ENCODE measurements at regions of chr12 and their contacts with region 1.

Region 1: DNA sequence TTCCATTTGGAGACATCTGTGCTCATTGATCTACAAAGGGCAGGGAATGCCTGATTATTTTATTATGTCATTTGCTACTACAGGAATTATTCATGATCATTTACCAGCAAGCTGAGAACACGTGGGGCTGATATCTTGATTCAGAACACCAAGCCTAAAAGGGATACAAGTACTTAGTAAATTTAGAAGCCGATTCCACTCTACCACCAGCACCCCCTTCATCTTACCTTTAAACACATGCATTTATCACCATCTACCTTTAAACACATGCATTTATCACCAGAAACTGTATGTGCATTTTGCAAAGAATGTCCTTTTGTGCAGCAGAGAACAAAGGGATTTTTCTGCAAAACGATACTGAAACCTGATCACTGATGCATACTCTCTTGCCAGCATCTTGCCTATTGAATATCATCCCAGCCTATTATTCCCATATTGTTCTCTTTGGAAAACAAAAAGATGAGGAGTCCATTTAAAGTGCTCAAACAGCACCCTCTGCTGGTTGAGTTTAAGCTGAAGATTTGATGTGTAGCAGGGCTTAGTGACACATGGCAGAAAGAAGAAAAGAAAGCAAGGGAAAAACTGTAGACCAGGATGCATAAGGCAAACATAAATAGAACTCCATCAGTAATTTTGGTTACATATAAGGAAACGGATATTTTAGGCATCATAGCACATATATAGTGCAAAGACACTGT is 132.6 kb upstream of the PLEKHG7 start:
- DNase-seq: peak in 4 of 5 donors; percentile 35 to 79 (median 52)
- H3K4me3 ChIP-seq: no peak overlapping the region
- H3K27ac ChIP-seq: no peak overlapping the region
- H3K4me1 ChIP-seq: peaks cover 2% of the 10 kb centered on the region
- H3K27me3 ChIP-seq: no peaks in the 10 kb centered on the region
- CTCF ChIP-seq: peak; percentile 47 to 93 (median 90)
- EP300 ChIP-seq: no peak
- POLR2A ChIP-seq: no peak

Region 2: GRCh38 chr12:91367234-91367849 is 1202.9 kb before region 1 on chr12:
- intact Hi-C with region 1: loop called in 1 of 4 experiments (anchors 5 kb)
- DNase-seq: no peak
- H3K4me3 ChIP-seq: no peak overlapping the region
- H3K27ac ChIP-seq: no peak overlapping the region
- H3K4me1 ChIP-seq: no peaks in the 10 kb centered on the region
- H3K27me3 ChIP-seq: no peaks in the 10 kb centered on the region
- CTCF ChIP-seq: peak; percentile 20 to 52 (median 34)
- EP300 ChIP-seq: no peak
- POLR2A ChIP-seq: no peak

Region 3: GRCh38 chr12:91382081-91382543 is 1188.1 kb before region 1 on chr12:
- intact Hi-C with region 1: loop called in 3 of 4 experiments (anchors 5 kb)
- DNase-seq: peak; percentile 75 to 88 (median 84)
- H3K4me3 ChIP-seq: peak overlapping the region; percentile 19
- H3K27ac ChIP-seq: peak overlapping the region in 1 of 2 donors; percentile 46
- H3K4me1 ChIP-seq: no peaks in the 10 kb centered on the region
- H3K27me3 ChIP-seq: no peaks in the 10 kb centered on the region
- CTCF ChIP-seq: peak; percentile 66 to 78 (median 77)
- EP300 ChIP-seq: no peak
- POLR2A ChIP-seq: no peak

Region 4: GRCh38 chr12:91577586-91578539 is 992.3 kb before region 1 on chr12:
- intact Hi-C with region 1: loop called in 1 of 4 experiments (anchors 10 kb)
- DNase-seq: no peak
- H3K4me3 ChIP-seq: no peak overlapping the region
- H3K27ac ChIP-seq: no peak overlapping the region
- H3K4me1 ChIP-seq: peaks cover 2% of the 10 kb centered on the region
- H3K27me3 ChIP-seq: no peaks in the 10 kb centered on the region
- CTCF ChIP-seq: peak in 2 of 3 donors; percentile 20 to 23
- EP300 ChIP-seq: no peak
- POLR2A ChIP-seq: no peak

Region 5: GRCh38 chr12:91811481-91812287 is 758.5 kb before region 1 on chr12:
- intact Hi-C with region 1: loop called in 1 of 4 experiments (anchors 5 kb)
- DNase-seq: peak; percentile 62 to 84 (median 78)
- H3K4me3 ChIP-seq: no peak overlapping the region
- H3K27ac ChIP-seq: no peak overlapping the region
- H3K4me1 ChIP-seq: no peaks in the 10 kb centered on the region
- H3K27me3 ChIP-seq: no peaks in the 10 kb centered on the region
- CTCF ChIP-seq: peak in 2 of 3 donors; percentile 68 to 76
- EP300 ChIP-seq: no peak
- POLR2A ChIP-seq: no peak

Region 6: DNA sequence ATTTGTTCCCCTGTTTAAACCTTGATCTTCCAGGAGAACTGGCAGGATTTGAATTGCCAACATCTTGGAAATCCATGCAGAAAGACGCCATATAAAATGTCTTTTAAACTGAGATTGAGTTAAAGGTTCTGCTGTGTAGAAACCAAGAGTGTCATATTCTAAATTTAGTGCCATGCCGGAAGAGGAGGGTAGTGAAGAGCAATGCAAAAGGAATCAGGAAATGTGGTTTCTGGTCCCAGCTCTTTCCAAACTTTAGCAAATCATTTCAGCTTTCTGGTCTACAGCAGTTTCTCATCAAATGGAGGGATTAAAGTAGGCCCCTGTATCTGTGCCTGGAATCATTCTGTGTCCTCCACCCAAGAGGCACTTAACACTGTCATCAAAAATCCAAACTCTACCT is 510.2 kb before region 1 on chr12:
- intact Hi-C with region 1: no loop called
- DNase-seq: no peak
- H3K4me3 ChIP-seq: no peak overlapping the region
- H3K27ac ChIP-seq: no peak overlapping the region
- H3K4me1 ChIP-seq: peaks cover 2% of the 10 kb centered on the region
- H3K27me3 ChIP-seq: no peaks in the 10 kb centered on the region
- CTCF ChIP-seq: no peak
- EP300 ChIP-seq: no peak
- POLR2A ChIP-seq: no peak

Region 7: DNA sequence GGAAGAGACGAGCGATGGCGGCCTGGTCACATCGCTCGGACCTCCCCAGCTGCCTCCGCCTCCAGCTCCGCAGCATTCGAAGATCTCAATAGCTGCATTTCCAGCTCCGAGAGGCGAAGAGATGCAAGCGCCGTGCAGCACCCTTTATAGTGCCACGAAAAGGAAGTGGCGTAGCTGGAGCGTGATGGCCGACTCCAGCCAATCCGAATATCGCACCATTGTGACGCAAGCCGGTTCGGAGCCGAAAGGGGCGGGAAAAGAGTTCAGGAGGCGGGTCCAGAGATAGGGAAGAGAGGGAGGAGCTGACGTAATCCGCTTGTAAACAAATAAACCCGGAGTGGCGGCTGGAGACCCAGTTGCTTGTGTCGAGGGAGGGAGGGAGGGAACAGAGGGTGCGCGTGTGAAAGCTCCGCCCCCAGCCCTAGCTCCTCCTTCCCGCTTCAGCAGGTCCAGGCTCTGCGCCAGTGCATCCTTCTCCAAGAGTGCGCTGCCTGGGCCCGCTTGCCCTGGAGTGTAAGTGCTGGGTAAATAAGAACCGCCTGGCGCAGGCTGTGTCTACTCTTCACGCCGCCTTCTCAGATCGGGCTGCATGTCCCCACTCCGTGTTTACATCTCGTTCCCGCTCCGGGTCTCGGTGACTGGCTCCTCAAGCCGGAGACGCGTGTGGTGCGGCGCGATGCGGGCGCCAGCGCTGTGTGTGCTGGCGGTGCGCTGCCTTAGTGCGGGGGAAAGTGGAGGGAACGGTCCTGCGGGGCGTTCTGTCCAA is 424.3 kb before region 1 on chr12 and contains the start of gene BTG1:
- intact Hi-C with region 1: loop called in 3 of 4 experiments (anchors 5 to 10 kb)
- DNase-seq: peak; percentile 99 to 100 (median 99)
- H3K4me3 ChIP-seq: peak within 1 kb of the TSS; percentile 100
- H3K27ac ChIP-seq: peak within 1 kb of the TSS; percentile 96 to 99
- H3K4me1 ChIP-seq: no peaks in the 10 kb centered on the region
- H3K27me3 ChIP-seq: no peaks in the 10 kb centered on the region
- CTCF ChIP-seq: peak; percentile 7 to 31 (median 20)
- EP300 ChIP-seq: peak; percentile 64
- POLR2A ChIP-seq: peak; percentile 98
- total RNA-seq, gene BTG1: 63.6 to 145 (median 86.1) TPM

Measured in ovary (tissue), 10 donors.